T-cell (primary cell): ENCODE measurements at regions of chr12 and their contacts with region 1.

Region 1: GRCh38 chr12:3803865-3804472 is 51.1 kb upstream of the CRACR2A start:
- DNase-seq: peak; percentile 27 to 83 (median 63)
- ATAC-seq: peak; percentile 64 to 91 (median 71)
- H3K4me3 ChIP-seq: no peak overlapping the region
- H3K4me3 Mint-ChIP-seq: no peak overlapping the region
- H3K27ac ChIP-seq: no peak overlapping the region
- H3K27ac Mint-ChIP-seq: no peak overlapping the region
- H3K4me1 ChIP-seq: no peaks in the 10 kb centered on the region
- H3K4me1 Mint-ChIP-seq: no peaks in the 10 kb centered on the region
- H3K27me3 ChIP-seq: no peaks in the 10 kb centered on the region
- H3K27me3 Mint-ChIP-seq: no peaks in the 10 kb centered on the region

Region 2: DNA sequence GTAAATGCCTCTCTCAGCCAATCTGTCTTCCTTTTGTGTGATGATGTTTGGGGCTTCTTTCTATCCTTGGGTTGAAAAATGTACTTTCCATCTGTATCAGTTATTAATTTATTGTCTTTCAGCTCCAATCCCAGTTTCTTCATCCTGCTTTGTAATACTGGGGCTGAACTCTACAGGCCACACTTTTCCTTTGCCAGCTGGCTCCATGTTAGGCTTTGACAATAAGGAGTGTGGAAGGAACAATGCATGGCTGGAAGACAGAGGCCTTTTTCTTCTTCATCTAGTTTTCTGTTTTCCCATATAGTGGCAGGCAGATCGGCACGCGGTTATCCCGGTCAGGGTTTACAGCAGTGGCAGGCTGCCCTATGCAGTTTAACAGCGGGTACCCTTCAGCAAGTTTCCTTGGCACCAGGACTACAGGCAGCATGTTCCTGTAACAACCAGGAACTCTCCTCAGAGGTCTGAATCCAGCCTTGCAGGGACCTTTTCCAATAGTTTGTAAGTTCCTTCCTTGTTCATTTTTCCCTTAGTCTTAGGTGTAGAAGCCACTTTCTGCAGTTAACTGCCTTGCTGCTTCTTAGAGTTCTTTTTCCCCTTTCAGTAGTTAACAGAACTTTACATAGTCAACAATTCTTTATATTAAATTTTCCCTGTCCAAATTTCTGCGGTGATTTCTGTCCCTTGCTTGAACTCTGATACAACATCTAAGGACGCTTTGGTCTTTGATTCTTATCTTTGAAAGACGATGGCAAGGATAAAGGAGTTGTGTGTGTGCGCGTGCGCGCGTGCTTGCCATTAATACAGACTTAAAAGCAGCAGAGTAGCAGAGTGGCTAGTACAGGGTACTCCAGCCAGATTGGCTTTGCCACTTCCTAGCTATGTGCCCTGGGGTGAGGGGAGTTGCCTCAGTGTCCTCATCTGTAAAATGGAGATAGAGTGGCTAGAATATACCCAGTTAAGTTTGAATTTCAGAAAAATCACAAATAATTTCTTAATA is 12.4 kb before region 1 on chr12:
- CTCF ChIA-PET with region 1: no interaction called
- POLR2A ChIA-PET with region 1: no interaction called
- DNase-seq: no peak
- ATAC-seq: no peak
- H3K4me3 ChIP-seq: no peak overlapping the region
- H3K4me3 Mint-ChIP-seq: no peak overlapping the region
- H3K27ac ChIP-seq: no peak overlapping the region
- H3K27ac Mint-ChIP-seq: no peak overlapping the region
- H3K4me1 ChIP-seq: no peaks in the 10 kb centered on the region
- H3K4me1 Mint-ChIP-seq: no peaks in the 10 kb centered on the region
- H3K27me3 ChIP-seq: no peaks in the 10 kb centered on the region
- H3K27me3 Mint-ChIP-seq: no peaks in the 10 kb centered on the region

Region 3: DNA sequence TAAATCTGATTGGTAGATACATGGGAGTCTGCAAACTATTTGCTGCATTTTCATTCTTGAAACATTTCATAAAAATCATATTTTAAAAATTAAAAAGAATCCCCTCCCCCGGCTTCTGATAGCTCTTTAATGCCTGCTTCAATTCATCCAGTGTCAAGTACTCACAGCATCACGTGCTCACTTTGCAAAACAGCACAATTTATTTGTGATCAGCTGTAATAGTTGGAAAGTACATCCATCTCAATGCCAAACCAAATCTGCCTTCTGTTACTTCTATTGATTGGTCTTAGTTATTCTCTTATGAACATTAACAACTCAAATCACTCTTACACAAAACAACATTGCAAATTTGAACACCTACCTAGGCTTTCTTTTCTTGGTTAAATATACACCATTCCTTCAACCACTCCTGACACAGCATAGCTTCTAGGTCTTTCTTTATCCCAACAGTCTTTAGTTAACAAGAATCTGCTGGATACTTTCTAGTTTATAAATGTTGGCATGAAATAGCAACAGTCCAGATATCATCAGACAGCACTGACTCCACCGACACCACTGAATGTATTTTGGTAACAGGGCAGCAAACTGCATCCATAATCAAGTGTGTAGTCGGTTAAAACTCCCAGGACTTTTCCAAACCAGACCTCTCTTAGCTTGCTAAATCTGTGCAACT is 11.3 kb after region 1 on chr12:
- CTCF ChIA-PET with region 1: interaction called in 1 of 2 experiments, 11 read pairs
- POLR2A ChIA-PET with region 1: no interaction called
- DNase-seq: no peak
- ATAC-seq: no peak
- H3K4me3 ChIP-seq: no peak overlapping the region
- H3K4me3 Mint-ChIP-seq: no peak overlapping the region
- H3K27ac ChIP-seq: no peak overlapping the region
- H3K27ac Mint-ChIP-seq: no peak overlapping the region
- H3K4me1 ChIP-seq: no peaks in the 10 kb centered on the region
- H3K4me1 Mint-ChIP-seq: peaks cover 8 to 9% (median 9%) of the 10 kb centered on the region in 3 donors
- H3K27me3 ChIP-seq: no peaks in the 10 kb centered on the region
- H3K27me3 Mint-ChIP-seq: no peaks in the 10 kb centered on the region

Region 4: GRCh38 chr12:3896801-3897331 is 92.9 kb after region 1 on chr12:
- CTCF ChIA-PET with region 1: no interaction called
- POLR2A ChIA-PET with region 1: no interaction called
- DNase-seq: peak in 2 of 35 experiments; percentile 10 to 25
- ATAC-seq: peak; percentile 31 to 41 (median 36)
- H3K4me3 ChIP-seq: peak overlapping the region in 1 of 2 donors; percentile 38
- H3K4me3 Mint-ChIP-seq: peak overlapping the region; percentile 59 to 66 (median 61)
- H3K27ac ChIP-seq: peak overlapping the region; percentile 84
- H3K27ac Mint-ChIP-seq: no peak overlapping the region
- H3K4me1 ChIP-seq: peaks cover 57 to 82% of the 10 kb centered on the region in 2 experiments
- H3K4me1 Mint-ChIP-seq: peaks cover 47 to 50% (median 48%) of the 10 kb centered on the region in 3 donors
- H3K27me3 ChIP-seq: no peaks in the 10 kb centered on the region
- H3K27me3 Mint-ChIP-seq: no peaks in the 10 kb centered on the region

Region 5: DNA sequence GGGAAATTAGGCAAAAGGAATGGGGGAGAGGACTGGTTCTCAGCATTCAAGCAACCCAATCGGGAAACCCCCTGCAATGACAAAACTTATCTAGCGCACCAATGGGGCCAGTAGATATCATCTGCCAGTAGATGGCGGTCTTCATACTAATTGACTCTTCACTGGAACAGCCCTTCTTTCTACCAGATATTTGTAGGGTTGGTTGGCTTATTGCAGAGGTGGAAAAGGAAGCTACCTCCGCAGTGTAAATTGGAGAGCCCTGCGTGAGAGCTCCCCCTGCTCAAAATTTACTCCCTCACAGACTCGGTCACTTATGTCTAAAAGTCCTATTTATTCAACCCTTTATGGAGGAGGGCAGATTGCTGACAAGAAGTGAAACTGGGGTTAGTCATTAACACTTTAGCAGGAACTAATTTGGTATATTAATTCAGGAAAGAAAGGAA is 303.5 kb after region 1 on chr12:
- CTCF ChIA-PET with region 1: no interaction called
- POLR2A ChIA-PET with region 1: no interaction called
- DNase-seq: peak; percentile 29 to 91 (median 70)
- ATAC-seq: peak; percentile 96 to 100 (median 97)
- H3K4me3 ChIP-seq: no peak overlapping the region
- H3K4me3 Mint-ChIP-seq: peak overlapping the region in 2 of 3 donors; percentile 28 to 45
- H3K27ac ChIP-seq: peak overlapping the region; percentile 65
- H3K27ac Mint-ChIP-seq: peak overlapping the region; percentile 71 to 79
- H3K4me1 ChIP-seq: peaks cover 7 to 12% of the 10 kb centered on the region in 2 experiments
- H3K4me1 Mint-ChIP-seq: peaks cover 14 to 21% (median 16%) of the 10 kb centered on the region in 3 donors
- H3K27me3 ChIP-seq: no peaks in the 10 kb centered on the region
- H3K27me3 Mint-ChIP-seq: no peaks in the 10 kb centered on the region